Activated B cell treated with CpG ODN at 0.5 μM for 24 hours (primary cell): ENCODE measurements at regions of chr19 and their contacts with region 1.

Region 1: DNA sequence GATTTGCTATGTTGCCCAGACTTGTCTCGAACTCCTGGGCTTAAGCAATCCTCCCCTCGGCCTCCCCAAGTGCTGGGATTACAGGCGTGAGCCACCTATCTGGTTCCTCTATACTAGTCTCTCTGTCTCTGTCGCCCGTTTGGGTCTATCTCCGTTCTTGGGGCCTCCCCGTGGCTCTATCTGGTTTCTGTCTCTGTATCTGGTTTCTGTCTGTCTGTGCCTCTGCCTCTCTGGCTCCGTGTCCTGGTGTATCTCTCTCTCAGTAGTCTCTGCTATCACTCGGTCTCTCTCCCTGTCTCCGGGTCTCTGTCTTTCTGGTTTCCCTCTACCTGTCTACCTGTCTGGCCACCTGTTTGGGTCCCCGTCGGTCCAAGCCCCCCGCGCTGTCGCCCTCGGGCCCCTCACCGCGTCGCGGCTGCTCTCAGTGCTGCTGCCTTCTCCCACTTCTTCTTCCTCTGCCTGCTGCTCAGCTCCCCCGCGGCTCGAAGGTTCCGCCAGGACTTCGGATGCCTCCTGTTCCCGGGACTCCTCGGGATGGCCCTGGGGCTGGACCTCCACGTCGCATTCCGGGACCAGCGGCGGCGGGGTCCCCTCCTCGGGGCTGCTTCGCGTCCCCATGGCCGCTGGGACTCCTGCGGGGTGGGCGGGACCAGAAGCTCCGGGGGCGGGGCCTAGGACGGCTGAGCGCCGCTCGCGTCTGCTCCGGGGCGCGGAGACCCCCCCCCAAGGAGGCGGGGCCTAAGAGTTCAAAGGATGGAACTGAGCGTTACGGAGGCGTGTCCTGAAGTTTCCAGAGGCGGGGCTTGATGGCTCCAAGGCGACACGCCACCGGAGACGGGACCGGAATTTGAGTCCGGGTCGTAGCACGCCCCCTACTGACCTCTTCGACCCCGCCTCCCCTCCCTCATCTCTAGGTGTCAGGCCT is 783 bp downstream of the PHLDB3 start:
- DNase-seq: peak; percentile 97
- ATAC-seq: peak; percentile 95
- H3K4me3 Mint-ChIP-seq: peak overlapping the region; percentile 96
- H3K27ac Mint-ChIP-seq: peak overlapping the region; percentile 96
- H3K4me1 Mint-ChIP-seq: peaks cover 19% of the 10 kb centered on the region
- H3K27me3 Mint-ChIP-seq: no peaks in the 10 kb centered on the region
- CTCF ChIP-seq: no peak

Region 2: DNA sequence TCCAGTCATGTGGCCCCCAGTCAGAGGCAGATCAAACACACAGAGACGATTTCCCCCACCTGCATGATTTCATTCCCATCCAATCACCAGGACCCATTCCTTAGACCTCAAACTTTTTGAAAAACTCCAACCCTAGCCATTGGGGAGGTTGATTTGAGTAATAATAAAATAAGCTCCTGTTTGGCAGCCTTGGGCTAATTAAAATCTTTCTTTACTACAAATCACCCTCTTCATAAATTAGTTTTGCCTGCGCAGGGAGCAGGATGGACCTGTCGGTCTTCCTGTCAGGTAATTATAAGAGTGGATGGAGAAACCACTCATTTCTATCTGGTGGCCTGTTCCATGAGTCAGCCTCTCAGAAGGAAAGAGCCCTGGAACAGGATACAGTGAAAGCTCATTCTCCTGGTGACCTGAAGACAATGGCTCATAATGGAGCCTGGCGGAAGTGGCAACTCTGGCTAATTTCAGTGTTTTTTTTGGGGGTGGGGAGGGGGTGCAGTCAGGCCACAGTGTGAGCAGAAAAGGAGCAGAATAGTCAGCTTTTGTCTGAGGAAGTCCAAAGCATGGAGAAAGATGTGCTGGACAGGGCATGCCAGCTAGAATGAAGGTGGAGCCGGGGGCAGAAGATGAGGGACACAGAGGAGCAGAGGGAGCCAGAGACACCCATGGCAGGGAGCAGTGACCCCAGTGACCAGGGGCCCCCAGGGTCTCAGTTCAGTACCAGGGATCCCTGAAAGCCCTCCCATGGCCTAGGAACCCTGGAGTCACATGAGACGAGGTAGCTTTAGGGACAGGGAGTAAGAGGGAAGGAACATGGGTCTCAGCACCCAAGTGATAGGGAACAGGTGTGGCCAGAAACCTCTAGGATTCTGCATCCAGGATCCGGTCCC is 202.6 kb before region 1 on chr19:
- CTCF ChIA-PET with region 1: no interaction called
- POLR2A ChIA-PET with region 1: no interaction called
- intact Hi-C with region 1: no loop called
- DNase-seq: no peak
- ATAC-seq: no peak
- H3K4me3 Mint-ChIP-seq: no peak overlapping the region
- H3K27ac Mint-ChIP-seq: no peak overlapping the region
- H3K4me1 Mint-ChIP-seq: no peaks in the 10 kb centered on the region
- H3K27me3 Mint-ChIP-seq: peaks cover 7% of the 10 kb centered on the region
- CTCF ChIP-seq: no peak

Region 3: DNA sequence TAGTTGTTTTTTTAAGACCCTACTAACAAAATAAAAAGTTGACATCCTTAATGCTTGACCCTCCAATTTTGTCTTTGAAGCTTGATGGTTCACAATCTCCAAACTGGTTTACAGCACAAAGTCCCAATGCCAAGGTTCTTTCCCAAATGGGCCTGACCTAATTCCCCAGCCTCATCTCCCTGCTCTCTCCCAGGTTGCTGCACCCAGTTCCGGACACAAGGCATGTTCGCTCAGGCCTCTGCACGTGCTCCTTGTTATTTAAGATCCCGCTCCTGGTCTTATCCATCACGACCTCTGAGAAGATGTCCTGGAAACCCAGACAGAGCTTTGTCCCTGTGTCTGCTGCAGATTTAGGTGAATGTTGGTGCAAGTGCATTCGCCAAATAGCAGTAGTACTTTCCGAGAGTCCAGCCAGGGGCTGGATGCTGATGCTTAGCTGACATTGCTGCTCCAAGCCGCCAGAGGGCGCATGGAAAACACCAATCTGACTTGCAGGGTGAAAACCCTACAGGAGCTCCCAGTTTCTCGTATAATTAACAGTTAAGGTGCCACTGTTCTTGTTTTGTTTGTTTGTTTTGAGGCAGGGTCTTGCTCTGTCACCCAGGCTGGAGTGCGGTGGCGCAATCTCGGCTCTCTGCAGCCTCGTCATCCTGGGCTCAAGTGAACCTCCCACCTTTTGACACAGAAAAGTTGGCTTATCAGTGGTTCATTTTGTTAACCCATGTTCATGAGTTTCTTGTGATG is 56.8 kb before region 1 on chr19:
- CTCF ChIA-PET with region 1: interaction called, 14 read pairs
- POLR2A ChIA-PET with region 1: interaction called, 8 read pairs
- intact Hi-C with region 1: loop called (anchors 1 kb)
- DNase-seq: peak; percentile 67
- ATAC-seq: peak; percentile 90
- H3K4me3 Mint-ChIP-seq: no peak overlapping the region
- H3K27ac Mint-ChIP-seq: no peak overlapping the region
- H3K4me1 Mint-ChIP-seq: peaks cover 6% of the 10 kb centered on the region
- H3K27me3 Mint-ChIP-seq: no peaks in the 10 kb centered on the region
- CTCF ChIP-seq: peak; percentile 47

Region 4: GRCh38 chr19:43474986-43475705 is 28.6 kb before region 1 on chr19:
- CTCF ChIA-PET with region 1: no interaction called
- POLR2A ChIA-PET with region 1: interaction called, 7 read pairs
- intact Hi-C with region 1: loop called (anchors 1 kb)
- DNase-seq: peak; percentile 93
- ATAC-seq: peak; percentile 98
- H3K4me3 Mint-ChIP-seq: peak overlapping the region; percentile 83
- H3K27ac Mint-ChIP-seq: peak overlapping the region; percentile 77
- H3K4me1 Mint-ChIP-seq: peaks cover 14% of the 10 kb centered on the region
- H3K27me3 Mint-ChIP-seq: no peaks in the 10 kb centered on the region
- CTCF ChIP-seq: no peak

Region 5: DNA sequence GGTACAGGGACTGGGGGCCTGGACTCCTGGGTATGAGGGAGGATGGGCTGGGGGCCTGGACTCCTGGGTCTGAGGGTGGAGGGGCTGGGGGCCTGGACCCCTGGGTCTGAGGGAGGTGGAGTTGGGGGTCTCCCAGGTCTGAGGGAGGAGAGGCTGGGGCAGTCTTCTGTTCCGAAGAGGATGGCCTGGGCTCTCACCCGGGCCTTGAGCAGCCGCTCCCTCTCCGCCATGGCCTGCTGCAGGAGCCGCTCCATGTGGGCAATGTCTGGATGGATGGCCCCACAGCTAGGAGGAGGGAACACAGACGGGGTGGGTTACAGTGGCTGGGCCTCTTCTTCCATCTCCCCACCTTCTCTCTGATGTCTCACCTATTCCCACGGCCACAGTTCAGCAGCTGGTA is 17.4 kb before region 1 on chr19:
- CTCF ChIA-PET with region 1: no interaction called
- POLR2A ChIA-PET with region 1: interaction called, 16 read pairs
- intact Hi-C with region 1: no loop called
- DNase-seq: no peak
- ATAC-seq: no peak
- H3K4me3 Mint-ChIP-seq: no peak overlapping the region
- H3K27ac Mint-ChIP-seq: no peak overlapping the region
- H3K4me1 Mint-ChIP-seq: peaks cover 36% of the 10 kb centered on the region
- H3K27me3 Mint-ChIP-seq: no peaks in the 10 kb centered on the region
- CTCF ChIP-seq: no peak

Region 6: GRCh38 chr19:43519436-43520088 is 15.8 kb after region 1 on chr19:
- CTCF ChIA-PET with region 1: interaction called, 6 read pairs
- POLR2A ChIA-PET with region 1: interaction called, 27 read pairs
- intact Hi-C with region 1: loop called (anchors 2 kb)
- DNase-seq: peak; percentile 57
- ATAC-seq: peak; percentile 51
- H3K4me3 Mint-ChIP-seq: peak overlapping the region; percentile 44
- H3K27ac Mint-ChIP-seq: peak overlapping the region; percentile 15
- H3K4me1 Mint-ChIP-seq: peaks cover 18% of the 10 kb centered on the region
- H3K27me3 Mint-ChIP-seq: no peaks in the 10 kb centered on the region
- CTCF ChIP-seq: peak; percentile 62

Region 7: GRCh38 chr19:43526884-43527859 is 23.4 kb after region 1 on chr19 and contains the start of gene ETHE1:
- CTCF ChIA-PET with region 1: interaction called, 3 read pairs
- POLR2A ChIA-PET with region 1: interaction called, 29 read pairs
- intact Hi-C with region 1: loop called (anchors 2 kb)
- DNase-seq: peak; percentile 76
- ATAC-seq: peak; percentile 92
- H3K4me3 Mint-ChIP-seq: peak within 1 kb of the TSS; percentile 89
- H3K27ac Mint-ChIP-seq: peak within 1 kb of the TSS; percentile 82
- H3K4me1 Mint-ChIP-seq: peaks cover 25% of the 10 kb centered on the region
- H3K27me3 Mint-ChIP-seq: no peaks in the 10 kb centered on the region
- CTCF ChIP-seq: no peak
- total RNA-seq, gene ETHE1: 16.3 and 16.7 TPM in 2 replicates

Region 8: DNA sequence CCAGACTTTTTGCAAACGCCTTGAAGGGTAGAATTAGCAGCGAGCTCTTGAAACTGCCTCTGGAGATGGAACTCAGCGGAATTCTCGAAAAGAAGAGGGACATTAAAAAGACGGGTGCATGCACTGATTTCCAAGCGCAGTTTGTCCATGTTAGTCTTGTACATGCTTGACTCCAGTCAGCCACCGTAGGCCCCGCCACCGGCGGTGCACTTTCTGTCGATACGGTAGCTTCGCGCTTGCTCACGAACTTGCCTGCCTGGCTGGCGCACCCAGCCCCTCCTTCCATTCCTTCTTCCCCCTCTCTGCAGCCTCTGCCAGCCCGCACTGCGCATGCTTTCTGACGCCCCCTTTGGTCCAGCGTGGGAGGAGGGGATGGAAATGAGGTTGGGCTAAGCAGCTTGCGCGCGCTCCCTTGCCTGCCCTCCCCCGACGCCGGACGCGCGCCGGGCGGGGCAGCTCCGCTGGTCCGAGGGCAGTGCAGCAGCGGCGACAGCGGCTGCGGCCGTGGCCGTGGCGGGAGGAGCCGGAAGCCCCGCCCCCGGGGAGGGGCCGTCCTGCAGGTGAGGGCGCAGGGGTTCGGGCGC is 29.3 kb after region 1 on chr19 and contains the start of gene ZNF575:
- CTCF ChIA-PET with region 1: no interaction called
- POLR2A ChIA-PET with region 1: interaction called, 29 read pairs
- intact Hi-C with region 1: loop called (anchors 1 kb)
- DNase-seq: peak; percentile 77
- ATAC-seq: peak; percentile 45
- H3K4me3 Mint-ChIP-seq: peak within 1 kb of the TSS; percentile 97
- H3K27ac Mint-ChIP-seq: peak within 1 kb of the TSS; percentile 98
- H3K4me1 Mint-ChIP-seq: peaks cover 19% of the 10 kb centered on the region
- H3K27me3 Mint-ChIP-seq: no peaks in the 10 kb centered on the region
- CTCF ChIP-seq: no peak
- total RNA-seq, gene ZNF575: 1.9 and 3.4 TPM in 2 replicates